ENCODE measurements at regions of chr22 and their contacts with region 1.

Region 1: DNA sequence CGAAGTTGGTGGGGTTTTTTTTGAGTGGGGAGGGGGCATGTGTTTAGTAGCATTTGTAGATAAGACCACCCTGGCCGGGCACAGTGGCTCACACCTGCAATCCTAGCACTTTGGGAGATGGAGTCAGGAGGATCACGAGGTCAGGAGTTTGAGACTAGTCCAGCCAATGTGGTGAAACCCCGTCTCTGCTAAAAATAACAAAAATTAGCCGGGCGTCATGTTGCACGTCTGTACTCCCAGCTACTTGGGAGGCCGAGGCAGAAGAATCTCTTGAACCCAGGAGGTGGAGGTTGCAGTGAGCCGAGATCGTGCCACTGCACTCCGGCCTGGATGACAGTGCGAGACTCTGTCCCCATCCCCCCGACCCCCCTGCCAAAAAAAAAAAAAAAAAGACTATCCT is 34.6 kb downstream of the CECR2 start:
- DNase-seq: no peak
- ATAC-seq: no peak
- H3K4me3 ChIP-seq: no peak overlapping the region
- H3K4me3 Mint-ChIP-seq: no peak overlapping the region
- H3K27ac ChIP-seq: no peak overlapping the region
- H3K27ac Mint-ChIP-seq: no peak overlapping the region
- H3K4me1 ChIP-seq: no peaks in the 10 kb centered on the region
- H3K4me1 Mint-ChIP-seq: no peaks in the 10 kb centered on the region
- H3K27me3 ChIP-seq: no peaks in the 10 kb centered on the region
- H3K27me3 Mint-ChIP-seq: no peaks in the 10 kb centered on the region
- CTCF ChIP-seq: no peak

Region 2: GRCh38 chr22:17348461-17349113 is 55.3 kb before region 1 on chr22:
- CTCF ChIA-PET with region 1: no interaction called
- POLR2A ChIA-PET with region 1: no interaction called
- intact Hi-C with region 1: loop called in 1 of 2 experiments (anchors 10 kb)
- DNase-seq: no peak
- ATAC-seq: no peak
- H3K4me3 ChIP-seq: no peak overlapping the region
- H3K4me3 Mint-ChIP-seq: no peak overlapping the region
- H3K27ac ChIP-seq: no peak overlapping the region
- H3K27ac Mint-ChIP-seq: no peak overlapping the region
- H3K4me1 ChIP-seq: no peaks in the 10 kb centered on the region
- H3K4me1 Mint-ChIP-seq: peaks cover 5% of the 10 kb centered on the region
- H3K27me3 ChIP-seq: no peaks in the 10 kb centered on the region
- H3K27me3 Mint-ChIP-seq: peaks cover 11% of the 10 kb centered on the region
- CTCF ChIP-seq: no peak